K562 (cell line): ENCODE measurements at regions of chr3 and their contacts with region 1.

Region 1: GRCh38 chr3:107938143-107938542 is 152.7 kb downstream of the CD47 start:
- DNase-seq: peak in 2 of 4 experiments; percentile 5 to 11
- ATAC-seq: no peak
- H3K4me3 ChIP-seq: no peak overlapping the region
- H3K27ac ChIP-seq: no peak overlapping the region
- H3K4me1 ChIP-seq: no peaks in the 10 kb centered on the region
- H3K27me3 ChIP-seq: no peaks in the 10 kb centered on the region; a peak in 3 of 5 replicates
- CTCF ChIP-seq: peak; percentile 7 to 49 (median 30); a peak in 3 of 6 replicates
- EP300 ChIP-seq: no peak
- POLR2A ChIP-seq: no peak
- RAD21 ChIP-seq: peak; percentile 57 to 70

Region 2: DNA sequence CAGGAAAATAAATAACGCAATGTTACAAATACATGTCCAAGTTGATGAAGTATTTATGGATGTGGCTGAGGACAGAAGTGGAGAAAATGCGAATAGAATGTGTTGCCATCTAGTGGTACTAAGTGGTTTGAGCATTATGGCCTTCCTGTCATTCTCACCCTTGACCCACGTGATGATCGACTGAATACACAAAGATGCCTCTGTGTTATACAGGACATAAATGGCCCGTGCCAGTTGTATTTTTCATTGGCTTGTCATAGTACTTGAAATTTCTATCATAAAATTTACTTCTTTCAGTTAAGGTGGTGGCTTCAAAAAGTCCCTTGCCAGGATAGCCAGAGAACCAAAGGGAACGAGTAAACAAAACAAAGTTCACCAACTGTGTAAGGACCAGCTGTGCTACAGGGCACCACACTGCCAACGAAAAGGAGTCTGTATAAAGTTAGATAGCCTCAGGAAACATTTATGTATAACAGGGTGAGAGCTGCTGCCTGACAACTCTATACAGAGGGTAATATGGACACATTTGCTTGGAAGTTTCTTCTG is 468.6 kb after region 1 on chr3:
- CTCF ChIA-PET with region 1: no interaction called
- POLR2A ChIA-PET with region 1: no interaction called
- in situ Hi-C with region 1: no loop called
- intact Hi-C with region 1: loop called (anchors 10 kb)
- DNase-seq: peak; percentile 36 to 60 (median 48)
- ATAC-seq: peak; percentile 96
- H3K4me3 ChIP-seq: no peak overlapping the region
- H3K27ac ChIP-seq: no peak overlapping the region
- H3K4me1 ChIP-seq: no peaks in the 10 kb centered on the region
- H3K27me3 ChIP-seq: no peaks in the 10 kb centered on the region; a peak in 1 of 5 replicates
- CTCF ChIP-seq: peak; percentile 55 to 75 (median 61)
- EP300 ChIP-seq: no peak
- POLR2A ChIP-seq: no peak
- RAD21 ChIP-seq: peak; percentile 78 to 84

Region 3: GRCh38 chr3:108477511-108478147 is 539.5 kb after region 1 on chr3:
- CTCF ChIA-PET with region 1: no interaction called
- POLR2A ChIA-PET with region 1: no interaction called
- in situ Hi-C with region 1: no loop called
- intact Hi-C with region 1: loop called (anchors 2 kb)
- DNase-seq: peak; percentile 35 to 62 (median 42)
- ATAC-seq: peak; percentile 82
- H3K4me3 ChIP-seq: no peak overlapping the region
- H3K27ac ChIP-seq: no peak overlapping the region
- H3K4me1 ChIP-seq: no peaks in the 10 kb centered on the region
- H3K27me3 ChIP-seq: no peaks in the 10 kb centered on the region
- CTCF ChIP-seq: peak; percentile 59 to 73 (median 61)
- EP300 ChIP-seq: no peak
- POLR2A ChIP-seq: no peak
- RAD21 ChIP-seq: peak; percentile 41 to 78